Activated CD4-positive, alpha-beta T cell treated with anti-CD3 and anti-CD28 coated beads, Interleukin-2, amount 10 ng/mL, durations not matched to agents 7 days and 5 days (primary cell): ENCODE measurements at regions of chr13 and their contacts with region 1.

Region 1: GRCh38 chr13:30132623-30133553 is 174.5 kb downstream of the KATNAL1 start:
- DNase-seq: peak; percentile 99
- H3K4me3 Mint-ChIP-seq: no peak overlapping the region
- H3K27ac Mint-ChIP-seq: peak overlapping the region; percentile 80
- H3K4me1 Mint-ChIP-seq: peaks cover 22% of the 10 kb centered on the region
- H3K27me3 Mint-ChIP-seq: no peaks in the 10 kb centered on the region

Region 2: DNA sequence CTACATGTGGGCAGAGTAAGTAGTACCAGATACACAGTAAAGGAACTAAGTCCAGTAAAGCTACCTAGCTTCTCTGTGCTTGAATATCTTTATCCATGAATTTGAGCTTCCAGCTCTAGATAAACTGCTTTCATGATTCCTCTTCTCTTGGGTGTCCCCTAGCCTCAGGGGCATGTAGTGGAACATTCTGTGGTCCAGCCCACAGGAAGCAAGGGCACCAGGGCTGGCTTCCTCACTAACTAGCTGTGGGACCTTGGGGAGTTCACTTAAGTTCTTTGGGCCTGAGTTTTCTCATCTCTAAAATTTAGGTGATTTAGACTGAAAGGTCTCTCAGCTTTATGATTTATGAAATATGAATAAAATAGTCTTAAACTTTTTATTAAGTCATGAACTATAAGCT is 11.2 kb before region 1 on chr13:
- CTCF ChIA-PET with region 1: interaction called, 97 read pairs
- POLR2A ChIA-PET with region 1: no interaction called
- DNase-seq: no peak
- H3K4me3 Mint-ChIP-seq: no peak overlapping the region
- H3K27ac Mint-ChIP-seq: no peak overlapping the region
- H3K4me1 Mint-ChIP-seq: peaks cover 47% of the 10 kb centered on the region
- H3K27me3 Mint-ChIP-seq: no peaks in the 10 kb centered on the region

Region 3: GRCh38 chr13:30148171-30148754 is 15.4 kb after region 1 on chr13:
- CTCF ChIA-PET with region 1: interaction called, 97 read pairs
- POLR2A ChIA-PET with region 1: interaction called, 4 read pairs
- DNase-seq: peak; percentile 72
- H3K4me3 Mint-ChIP-seq: peak overlapping the region; percentile 43
- H3K27ac Mint-ChIP-seq: peak overlapping the region; percentile 97
- H3K4me1 Mint-ChIP-seq: peaks cover 91% of the 10 kb centered on the region
- H3K27me3 Mint-ChIP-seq: no peaks in the 10 kb centered on the region

Region 4: GRCh38 chr13:30153545-30154441 is 20.9 kb after region 1 on chr13:
- CTCF ChIA-PET with region 1: interaction called, 40 read pairs
- POLR2A ChIA-PET with region 1: interaction called, 4 read pairs
- DNase-seq: no peak
- H3K4me3 Mint-ChIP-seq: no peak overlapping the region
- H3K27ac Mint-ChIP-seq: no peak overlapping the region
- H3K4me1 Mint-ChIP-seq: peaks cover 79% of the 10 kb centered on the region
- H3K27me3 Mint-ChIP-seq: no peaks in the 10 kb centered on the region

Region 5: DNA sequence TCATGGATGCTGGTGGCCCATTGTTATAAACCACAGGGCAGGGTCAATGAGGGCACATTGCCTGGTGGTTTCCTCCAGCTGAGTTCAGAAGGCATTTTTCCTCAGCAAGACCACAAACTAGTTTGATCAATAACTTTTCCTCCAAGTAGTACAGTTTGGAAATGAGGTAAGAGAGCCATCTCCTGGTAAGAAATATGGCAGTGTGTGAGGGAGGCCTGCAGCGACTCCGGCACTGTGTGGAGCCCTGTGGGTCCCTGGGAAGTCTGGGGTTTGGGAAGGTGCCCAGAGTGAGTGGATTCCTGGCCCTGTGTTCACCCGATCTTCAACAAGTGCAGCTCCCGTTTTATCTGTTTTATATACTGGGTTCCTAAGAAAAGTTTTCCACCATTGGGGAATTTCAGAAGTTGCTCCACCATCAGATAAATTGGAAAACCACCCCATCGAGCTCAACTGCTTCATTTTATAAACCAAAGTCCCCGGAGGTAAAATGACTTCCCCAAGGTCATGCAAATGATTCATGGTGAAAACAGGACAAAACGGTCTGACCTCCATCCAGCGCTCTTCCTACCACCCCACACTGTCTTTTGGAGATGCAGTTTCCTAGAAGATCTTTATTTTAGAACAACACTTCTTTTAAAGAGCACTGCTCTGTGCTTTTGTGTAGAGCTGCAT is 26.0 kb after region 1 on chr13:
- CTCF ChIA-PET with region 1: interaction called, 40 read pairs
- POLR2A ChIA-PET with region 1: interaction called, 4 read pairs
- DNase-seq: peak; percentile 43
- H3K4me3 Mint-ChIP-seq: no peak overlapping the region
- H3K27ac Mint-ChIP-seq: peak overlapping the region; percentile 47
- H3K4me1 Mint-ChIP-seq: peaks cover 52% of the 10 kb centered on the region
- H3K27me3 Mint-ChIP-seq: no peaks in the 10 kb centered on the region